Activated naive CD4-positive, alpha-beta T cell treated with anti-CD3 and anti-CD28 coated beads for 36 hours (primary cell): ENCODE measurements at regions of chr20 and their contacts with region 1.

Region 1: GRCh38 chr20:7231303-7231702 is 463.8 kb downstream of the BMP2 start:
- DNase-seq: no peak
- H3K4me3 Mint-ChIP-seq: no peak overlapping the region
- H3K27ac Mint-ChIP-seq: no peak overlapping the region
- H3K4me1 Mint-ChIP-seq: no peaks in the 10 kb centered on the region
- H3K27me3 Mint-ChIP-seq: no peaks in the 10 kb centered on the region

Region 2: GRCh38 chr20:6562111-6562510 is 669.2 kb before region 1 on chr20:
- CTCF ChIA-PET with region 1: no interaction called
- intact Hi-C with region 1: loop called (anchors 5 kb)
- DNase-seq: no peak
- H3K4me3 Mint-ChIP-seq: no peak overlapping the region
- H3K27ac Mint-ChIP-seq: no peak overlapping the region
- H3K4me1 Mint-ChIP-seq: no peaks in the 10 kb centered on the region
- H3K27me3 Mint-ChIP-seq: no peaks in the 10 kb centered on the region

Region 3: DNA sequence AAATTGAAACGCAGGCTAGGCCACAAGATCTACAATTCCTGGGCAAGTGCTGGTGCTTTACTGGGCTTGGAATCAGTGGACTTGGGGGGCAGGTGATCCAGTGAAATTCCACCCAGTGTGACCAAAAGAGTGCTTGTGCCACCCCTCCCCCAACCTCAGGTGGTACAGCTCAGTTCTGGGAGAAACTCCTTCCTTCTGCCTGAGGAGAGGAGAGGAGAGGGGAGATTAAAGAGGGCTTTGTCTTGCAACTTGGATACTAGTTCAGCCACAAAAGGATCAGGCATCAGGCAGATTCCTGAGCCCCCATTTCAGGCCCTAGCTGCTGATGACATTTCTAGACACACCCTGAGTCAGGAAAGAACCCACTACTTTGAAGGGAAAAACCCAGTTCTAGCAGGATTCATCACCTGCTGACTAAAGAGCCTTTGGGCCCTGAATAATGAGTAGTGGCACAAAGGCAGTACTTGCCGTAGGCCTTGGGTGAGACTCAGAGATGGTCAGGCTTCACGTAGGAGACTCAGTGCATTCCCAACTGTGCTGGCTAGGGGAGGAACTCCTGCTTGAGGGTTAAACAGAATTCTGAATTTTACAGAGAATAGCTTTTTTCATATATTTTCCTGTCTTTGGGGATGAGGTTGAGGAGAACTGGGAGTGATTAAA is 17.1 kb before region 1 on chr20:
- CTCF ChIA-PET with region 1: no interaction called
- intact Hi-C with region 1: no loop called
- DNase-seq: no peak
- H3K4me3 Mint-ChIP-seq: no peak overlapping the region
- H3K27ac Mint-ChIP-seq: no peak overlapping the region
- H3K4me1 Mint-ChIP-seq: no peaks in the 10 kb centered on the region
- H3K27me3 Mint-ChIP-seq: no peaks in the 10 kb centered on the region